Activated T-helper 2 cell treated with anti-CD3 and anti-CD28 coated beads, Interferon-gamma antibody, Interleukin-2, Interleukin-4, amounts not matched to agents 10 μg/mL and 5 μg/mL and 100 μg/mL, durations not matched to agents 14 hours and 24 hours and 36 hours (primary cell): ENCODE measurements at regions of chrX and their contacts with region 1.

Region 1: DNA sequence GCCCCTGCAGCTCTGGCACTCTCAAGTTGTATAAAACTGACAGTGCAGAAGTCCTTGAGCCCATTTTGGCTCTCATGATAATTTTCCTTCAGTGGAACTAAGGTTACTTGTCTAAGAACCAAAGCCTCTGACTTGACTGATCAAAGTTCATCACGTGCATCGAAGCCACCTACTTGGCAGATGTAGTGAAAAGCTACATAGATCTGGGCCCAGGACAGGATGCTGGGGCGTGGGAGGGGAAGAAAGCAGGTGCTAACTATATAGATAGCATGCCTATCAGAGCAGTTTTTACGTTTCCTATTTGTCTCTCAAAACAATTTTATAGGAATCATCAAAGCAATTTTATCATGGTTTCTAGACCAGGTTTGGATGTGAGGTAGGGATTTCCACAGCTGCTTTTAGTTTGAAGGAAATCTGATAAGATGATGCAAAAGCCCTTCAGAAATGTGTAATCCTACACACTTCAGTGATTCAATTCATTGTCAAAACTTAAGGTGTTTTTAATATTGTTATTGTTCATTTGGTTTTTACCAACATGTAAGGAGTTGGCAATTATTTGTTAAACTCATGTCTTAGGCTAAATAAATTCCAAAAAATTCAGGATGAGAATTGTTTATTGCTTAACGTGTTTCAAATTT is 1.2 kb upstream of the CD40LG start:
- DNase-seq: no peak
- H3K4me3 Mint-ChIP-seq: peak overlapping the region; percentile 97
- H3K27ac Mint-ChIP-seq: peak overlapping the region; percentile 98
- H3K4me1 Mint-ChIP-seq: peaks cover 52% of the 10 kb centered on the region
- H3K27me3 Mint-ChIP-seq: no peaks in the 10 kb centered on the region

Region 2: GRCh38 chrX:136525738-136526606 is 120.7 kb before region 1 on chrX:
- intact Hi-C with region 1: no loop called
- DNase-seq: no peak
- H3K4me3 Mint-ChIP-seq: no peak overlapping the region
- H3K27ac Mint-ChIP-seq: no peak overlapping the region
- H3K4me1 Mint-ChIP-seq: peaks cover 5% of the 10 kb centered on the region
- H3K27me3 Mint-ChIP-seq: peaks cover 2% of the 10 kb centered on the region

Region 3: DNA sequence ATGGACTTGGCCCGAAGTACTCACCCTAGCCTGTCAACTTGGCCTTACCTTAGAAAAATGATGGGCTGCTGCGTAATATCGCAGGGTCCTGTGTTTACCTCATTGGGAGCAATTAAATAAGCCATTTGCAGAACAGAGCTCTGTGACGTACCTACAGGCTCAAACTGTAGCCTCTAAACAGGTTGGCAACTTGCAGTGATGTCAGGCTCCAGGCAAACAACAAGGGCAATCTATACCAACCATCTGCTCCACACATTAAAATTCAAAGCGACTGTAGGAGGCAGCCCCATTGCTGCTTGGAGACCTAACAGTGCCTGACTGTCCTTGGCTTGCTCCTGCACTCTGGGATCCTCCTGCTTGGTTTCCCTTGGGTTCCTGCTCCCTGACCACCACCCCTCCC is 97.5 kb before region 1 on chrX:
- intact Hi-C with region 1: no loop called
- DNase-seq: no peak
- H3K4me3 Mint-ChIP-seq: no peak overlapping the region
- H3K27ac Mint-ChIP-seq: no peak overlapping the region
- H3K4me1 Mint-ChIP-seq: peaks cover 30% of the 10 kb centered on the region
- H3K27me3 Mint-ChIP-seq: no peaks in the 10 kb centered on the region

Region 4: GRCh38 chrX:136588041-136588788 is 58.5 kb before region 1 on chrX:
- intact Hi-C with region 1: no loop called
- DNase-seq: no peak
- H3K4me3 Mint-ChIP-seq: peak overlapping the region; percentile 40
- H3K27ac Mint-ChIP-seq: peak overlapping the region; percentile 79
- H3K4me1 Mint-ChIP-seq: peaks cover 51% of the 10 kb centered on the region
- H3K27me3 Mint-ChIP-seq: no peaks in the 10 kb centered on the region

Region 5: DNA sequence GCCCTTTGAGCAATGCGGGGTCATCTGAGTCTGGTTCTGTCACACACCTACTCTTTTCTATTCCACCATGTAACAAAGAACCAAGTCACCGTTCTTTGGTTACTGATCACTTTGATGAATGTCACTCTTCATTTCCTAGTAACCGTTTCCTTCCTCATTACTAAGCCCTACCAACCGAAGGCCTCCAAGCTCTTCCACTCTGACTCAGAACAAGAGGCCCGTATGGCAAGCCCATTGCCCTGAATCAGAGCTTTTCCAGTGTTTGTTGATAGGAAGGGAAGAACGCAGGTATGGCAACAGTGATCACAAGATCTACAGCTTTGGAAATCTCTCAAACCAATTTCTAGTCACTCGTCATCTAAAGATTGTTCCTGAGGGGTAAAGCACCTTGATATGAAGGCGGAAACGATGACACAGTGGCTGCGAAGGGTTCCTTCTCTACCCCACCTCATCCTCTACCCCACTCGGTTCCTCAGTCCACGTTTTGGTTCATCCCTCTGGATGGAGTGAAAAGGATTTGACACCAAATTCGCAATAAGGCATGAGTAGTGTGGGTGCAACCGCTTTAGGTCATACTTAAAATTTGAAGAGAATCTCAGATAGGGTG is 26.7 kb before region 1 on chrX:
- intact Hi-C with region 1: loop called (anchors 1 kb)
- DNase-seq: peak; percentile 51
- H3K4me3 Mint-ChIP-seq: no peak overlapping the region
- H3K27ac Mint-ChIP-seq: peak overlapping the region; percentile 84
- H3K4me1 Mint-ChIP-seq: peaks cover 67% of the 10 kb centered on the region
- H3K27me3 Mint-ChIP-seq: no peaks in the 10 kb centered on the region

Region 6: DNA sequence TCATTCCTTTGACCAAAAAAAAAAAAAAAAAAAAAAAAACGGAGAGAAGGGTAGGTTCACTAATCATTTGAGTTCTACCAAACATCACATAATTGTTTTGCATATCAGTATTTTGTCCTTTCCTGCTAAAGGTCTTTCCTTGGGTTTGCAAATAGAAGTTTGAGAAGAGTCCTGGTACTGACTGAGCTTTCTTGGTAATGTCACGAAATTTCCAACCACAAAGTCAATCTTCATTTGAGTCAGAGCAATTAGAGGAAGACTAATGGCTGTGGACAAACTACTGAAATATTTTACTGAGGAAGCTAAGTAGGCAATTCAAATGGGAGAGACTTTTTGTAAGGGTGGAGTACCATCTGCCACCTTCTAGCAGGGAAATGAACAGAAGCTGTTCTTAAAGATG is 20.5 kb before region 1 on chrX:
- intact Hi-C with region 1: loop called (anchors 1 kb)
- DNase-seq: no peak
- H3K4me3 Mint-ChIP-seq: peak overlapping the region; percentile 26
- H3K27ac Mint-ChIP-seq: peak overlapping the region; percentile 93
- H3K4me1 Mint-ChIP-seq: peaks cover 80% of the 10 kb centered on the region
- H3K27me3 Mint-ChIP-seq: no peaks in the 10 kb centered on the region

Region 7: GRCh38 chrX:136635235-136635634 is 11.5 kb before region 1 on chrX:
- intact Hi-C with region 1: loop called (anchors 1 kb)
- DNase-seq: no peak
- H3K4me3 Mint-ChIP-seq: peak overlapping the region; percentile 55
- H3K27ac Mint-ChIP-seq: peak overlapping the region; percentile 80
- H3K4me1 Mint-ChIP-seq: peaks cover 71% of the 10 kb centered on the region
- H3K27me3 Mint-ChIP-seq: no peaks in the 10 kb centered on the region